ENCODE measurements at regions of chr12 and their contacts with region 1.

Region 1: DNA sequence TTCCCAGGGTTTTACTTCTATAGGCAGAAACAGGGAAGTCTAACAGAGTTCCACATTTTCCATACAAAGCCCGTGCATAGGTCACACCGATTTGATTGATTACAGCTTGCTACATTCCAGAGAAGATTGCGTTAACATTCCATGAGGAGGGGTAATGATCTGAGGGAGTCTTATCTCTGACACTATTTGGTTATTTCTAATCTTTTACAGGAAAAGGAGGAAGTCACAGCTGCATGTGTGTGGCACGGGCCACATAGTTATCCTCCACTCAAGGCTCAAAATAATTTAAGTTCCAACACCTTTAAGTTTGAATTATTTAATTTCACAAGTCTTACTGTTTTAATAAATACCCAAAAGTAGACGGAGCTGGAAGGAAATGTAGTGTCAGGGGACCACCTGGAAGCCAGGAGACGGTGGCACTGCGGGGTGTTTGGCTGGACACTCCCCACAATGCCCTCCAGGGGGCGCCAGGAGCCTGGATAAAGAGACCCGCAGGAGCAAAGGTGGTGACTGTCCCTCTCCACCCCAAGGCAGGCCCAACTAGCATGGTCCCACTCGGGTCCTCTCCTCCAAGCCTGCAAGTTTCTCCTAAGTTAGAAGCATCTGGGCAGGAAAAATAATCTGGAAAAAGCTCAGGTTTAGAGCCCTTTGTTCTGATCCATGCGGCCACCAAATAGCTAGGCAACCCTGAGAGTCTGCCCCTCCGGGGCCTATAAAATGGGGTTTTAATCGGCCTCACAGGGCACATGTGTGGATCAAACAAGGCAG is 20.2 kb downstream of the KRT8 start:
- DNase-seq: peak; percentile 63 to 75 (median 69)
- H3K4me3 ChIP-seq: no peak overlapping the region
- H3K27ac ChIP-seq: no peak overlapping the region
- H3K4me1 ChIP-seq: peaks cover 0 to 11% (median 0%) of the 10 kb centered on the region in 4 experiments
- H3K27me3 ChIP-seq: no peaks in the 10 kb centered on the region

Region 2: GRCh38 chr12:52895061-52895887 is 10.6 kb after region 1 on chr12:
- CTCF ChIA-PET with region 1: interaction called, 47 read pairs
- POLR2A ChIA-PET with region 1: no interaction called
- DNase-seq: no peak
- H3K4me3 ChIP-seq: no peak overlapping the region
- H3K27ac ChIP-seq: no peak overlapping the region
- H3K4me1 ChIP-seq: no peaks in the 10 kb centered on the region
- H3K27me3 ChIP-seq: no peaks in the 10 kb centered on the region

Region 3: DNA sequence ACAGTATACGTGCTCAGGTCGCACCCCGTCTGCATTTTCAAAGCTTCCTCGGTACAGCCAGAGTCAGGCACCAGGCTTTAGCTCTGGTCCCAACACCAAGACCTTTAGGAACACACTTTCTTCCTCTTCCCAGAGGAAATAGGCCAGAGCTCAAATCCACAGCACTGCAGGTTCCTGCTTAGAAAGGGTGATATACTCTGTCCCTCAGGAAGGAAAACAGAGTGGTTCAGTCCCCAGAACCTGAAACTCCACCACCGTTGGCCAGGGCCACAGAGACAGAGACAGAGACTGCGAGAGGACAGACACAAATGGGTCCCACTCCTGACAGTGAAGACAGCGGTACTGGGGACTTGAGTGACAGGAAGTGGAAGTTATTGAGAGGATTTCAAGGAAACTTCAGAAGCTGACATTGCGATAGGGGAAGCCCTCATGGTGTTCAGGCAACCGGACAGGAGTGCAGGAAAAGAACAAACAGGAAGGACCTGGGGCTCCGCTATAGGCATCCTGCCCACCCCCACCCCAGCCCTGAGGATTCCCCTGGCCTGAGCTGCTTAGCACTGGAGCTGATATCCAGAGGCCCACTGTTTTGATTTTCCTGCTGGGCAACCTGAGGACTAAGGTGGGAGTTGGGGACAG is 25.7 kb after region 1 on chr12:
- CTCF ChIA-PET with region 1: interaction called, 20 read pairs
- POLR2A ChIA-PET with region 1: no interaction called
- DNase-seq: no peak
- H3K4me3 ChIP-seq: peak overlapping the region in 1 of 7 experiments; percentile 5
- H3K27ac ChIP-seq: no peak overlapping the region
- H3K4me1 ChIP-seq: peaks cover 7 to 48% (median 44%) of the 10 kb centered on the region in 4 experiments
- H3K27me3 ChIP-seq: no peaks in the 10 kb centered on the region

Region 4: GRCh38 chr12:52949413-52950331 is 65.0 kb after region 1 on chr12:
- CTCF ChIA-PET with region 1: interaction called, 47 read pairs
- POLR2A ChIA-PET with region 1: no interaction called
- DNase-seq: peak in 2 of 3 donors; percentile 48 to 61
- H3K4me3 ChIP-seq: peak overlapping the region in 6 of 7 experiments; percentile 5 to 84 (median 67)
- H3K27ac ChIP-seq: peak overlapping the region; percentile 33 to 83
- H3K4me1 ChIP-seq: peaks cover 0 to 20% (median 3%) of the 10 kb centered on the region in 4 experiments
- H3K27me3 ChIP-seq: peaks cover 0 to 12% (median 0%) of the 10 kb centered on the region in 5 experiments

Region 5: DNA sequence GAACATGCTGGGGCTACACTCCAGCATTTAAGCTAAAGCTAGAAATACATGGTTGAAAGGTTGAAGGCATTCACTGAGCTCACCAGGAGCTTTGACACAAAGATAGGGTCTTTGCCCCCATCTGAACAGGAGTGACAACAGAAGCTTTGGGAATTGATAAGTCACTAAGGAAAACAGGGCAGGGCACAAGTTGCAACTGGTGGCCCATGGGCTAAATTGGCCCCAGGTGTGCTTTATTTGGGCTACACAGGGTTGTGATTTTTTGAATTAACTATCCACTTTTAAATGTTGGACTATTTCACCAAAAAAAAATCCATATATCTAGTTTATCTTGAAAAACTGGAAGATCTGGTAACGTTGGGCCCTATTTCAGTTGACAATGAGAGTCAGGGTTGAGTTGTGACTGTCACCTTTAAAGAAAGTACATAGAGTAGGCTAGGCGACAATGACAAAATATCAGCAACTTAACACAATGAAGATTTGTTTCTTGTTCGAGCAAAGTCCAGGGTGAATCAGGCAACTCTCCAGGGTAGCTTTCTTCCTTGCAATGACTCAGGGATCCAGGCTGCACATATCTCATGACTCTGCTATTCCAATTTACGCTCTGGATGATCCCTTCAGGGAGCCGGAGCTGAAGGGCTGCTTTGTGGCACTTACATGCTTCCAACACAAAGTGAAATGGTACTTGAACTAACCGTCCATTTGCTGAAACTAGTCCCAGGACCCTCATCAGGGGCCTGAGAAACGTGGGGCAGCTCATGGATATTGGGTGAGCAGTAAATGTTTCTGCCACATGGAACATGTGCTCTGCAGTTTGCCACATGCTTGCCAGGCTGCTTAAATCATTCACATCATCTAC is 108.2 kb after region 1 on chr12:
- CTCF ChIA-PET with region 1: interaction called, 11 read pairs
- POLR2A ChIA-PET with region 1: no interaction called
- DNase-seq: no peak
- H3K4me3 ChIP-seq: no peak overlapping the region
- H3K27ac ChIP-seq: no peak overlapping the region
- H3K4me1 ChIP-seq: no peaks in the 10 kb centered on the region
- H3K27me3 ChIP-seq: no peaks in the 10 kb centered on the region